Right ventricle myocardium inferior (tissue), 1 donor: ENCODE measurements at regions of chr9 and their contacts with region 1.

Region 1: DNA sequence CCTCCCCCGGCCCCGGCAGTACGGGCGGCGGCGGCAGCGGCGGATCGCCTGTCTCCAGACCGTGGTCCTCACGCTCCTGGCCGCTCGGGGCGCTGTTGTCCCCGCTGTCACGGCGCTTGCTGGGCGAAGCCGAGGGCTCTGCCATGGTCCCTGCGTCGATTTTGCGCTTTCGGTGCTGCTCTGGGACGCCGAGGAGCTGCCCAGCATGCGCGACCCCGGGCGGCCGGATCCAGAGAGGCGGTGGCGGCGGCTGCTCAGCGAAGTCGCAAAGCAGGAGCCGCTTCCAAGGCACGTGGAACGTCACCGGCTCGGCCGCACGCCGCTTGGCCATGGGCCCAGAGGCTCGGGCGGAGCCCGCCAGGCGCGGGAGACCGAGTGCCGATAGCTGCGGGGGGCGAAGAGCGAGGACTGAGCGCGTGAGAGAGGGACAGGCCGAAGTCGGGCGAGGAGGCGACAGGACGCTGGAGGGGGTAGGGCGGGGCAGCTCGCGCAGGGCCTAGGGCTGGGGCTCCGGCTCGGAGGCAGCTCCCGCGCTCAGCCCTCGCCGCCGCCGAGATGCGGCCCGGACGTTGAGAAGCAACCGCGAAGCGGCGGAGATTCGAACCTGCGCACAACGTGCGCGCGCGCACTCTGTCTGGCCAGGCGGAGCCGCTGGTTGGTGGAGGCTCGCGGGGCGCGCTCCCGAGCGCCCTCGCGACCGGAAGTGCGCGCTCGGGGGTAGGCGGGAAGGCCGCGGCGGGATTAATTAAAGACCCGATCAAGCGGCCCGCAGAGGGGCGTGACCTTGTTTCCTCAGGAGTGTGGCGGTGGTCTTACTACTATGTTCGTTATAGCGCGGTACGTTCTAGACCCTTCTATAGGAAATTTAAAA is at the start of gene C9orf40:
- DNase-seq: peak; percentile 96
- ATAC-seq: peak; percentile 99
- total RNA-seq, gene C9orf40: 2.8 TPM

Region 2: DNA sequence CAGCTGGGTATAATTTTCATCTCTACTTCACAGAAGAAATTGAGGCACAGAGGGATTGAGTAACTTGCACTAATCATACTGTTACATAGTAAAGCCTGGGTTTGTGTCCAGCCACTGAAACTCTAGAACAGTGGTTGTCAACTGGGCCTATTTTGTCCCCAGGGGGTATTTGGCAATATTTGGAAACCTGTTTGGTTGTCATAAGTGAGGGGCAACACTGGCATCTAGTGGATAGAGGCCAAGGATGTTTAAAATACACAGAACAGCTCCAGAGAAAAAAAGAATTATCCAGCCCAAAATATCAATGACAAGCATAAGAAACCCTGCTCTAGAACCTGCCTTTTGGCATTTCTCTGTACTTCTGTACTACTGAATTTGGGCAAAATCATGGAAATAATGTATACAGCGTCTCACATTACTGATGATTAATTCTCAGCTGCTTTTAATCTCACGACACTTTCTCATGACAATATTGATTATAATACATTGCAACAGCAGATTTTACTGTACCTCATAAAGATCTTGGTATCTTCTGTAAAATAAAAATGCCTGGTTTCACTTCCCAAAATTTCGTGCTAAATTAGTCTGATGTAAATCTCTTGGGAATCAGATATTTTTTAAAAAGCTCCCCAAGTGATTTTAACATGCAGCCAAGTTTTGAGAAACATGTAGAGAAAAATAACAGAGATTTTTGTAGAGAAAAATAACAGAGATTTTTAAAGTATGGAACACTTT is 342.7 kb before region 1 on chr9:
- intact Hi-C with region 1: no loop called
- DNase-seq: no peak
- ATAC-seq: no peak

Region 3: GRCh38 chr9:74773886-74774479 is 178.5 kb before region 1 on chr9:
- intact Hi-C with region 1: loop called (anchors 5 kb)
- DNase-seq: peak; percentile 80
- ATAC-seq: no peak

Region 4: GRCh38 chr9:74887041-74887980 is 65.2 kb before region 1 on chr9 and contains the start of gene TRPM6:
- intact Hi-C with region 1: loop called (anchors 1 kb)
- DNase-seq: peak; percentile 93
- ATAC-seq: peak; percentile 89
- total RNA-seq, gene TRPM6: 0.27 TPM

Region 5: DNA sequence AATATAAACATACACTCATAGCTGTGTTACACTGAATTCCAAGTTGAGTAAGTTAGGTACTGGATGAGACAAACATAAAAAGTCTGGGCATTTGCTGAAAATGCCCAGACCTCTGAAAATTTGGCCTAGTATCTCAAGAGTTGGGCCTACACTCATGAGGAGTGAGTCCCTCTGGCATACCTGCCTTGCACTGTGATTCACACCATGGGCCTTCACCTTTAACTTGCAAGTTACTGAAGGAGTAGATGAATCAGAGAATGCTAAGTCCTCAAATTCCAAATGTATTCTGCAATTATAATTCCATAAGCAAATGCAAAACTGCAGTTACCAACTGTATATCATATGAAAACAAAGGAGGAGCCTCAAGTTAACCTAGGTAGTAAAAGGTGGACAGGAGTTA is 32.5 kb after region 1 on chr9:
- intact Hi-C with region 1: no loop called
- DNase-seq: no peak
- ATAC-seq: no peak

Region 6: DNA sequence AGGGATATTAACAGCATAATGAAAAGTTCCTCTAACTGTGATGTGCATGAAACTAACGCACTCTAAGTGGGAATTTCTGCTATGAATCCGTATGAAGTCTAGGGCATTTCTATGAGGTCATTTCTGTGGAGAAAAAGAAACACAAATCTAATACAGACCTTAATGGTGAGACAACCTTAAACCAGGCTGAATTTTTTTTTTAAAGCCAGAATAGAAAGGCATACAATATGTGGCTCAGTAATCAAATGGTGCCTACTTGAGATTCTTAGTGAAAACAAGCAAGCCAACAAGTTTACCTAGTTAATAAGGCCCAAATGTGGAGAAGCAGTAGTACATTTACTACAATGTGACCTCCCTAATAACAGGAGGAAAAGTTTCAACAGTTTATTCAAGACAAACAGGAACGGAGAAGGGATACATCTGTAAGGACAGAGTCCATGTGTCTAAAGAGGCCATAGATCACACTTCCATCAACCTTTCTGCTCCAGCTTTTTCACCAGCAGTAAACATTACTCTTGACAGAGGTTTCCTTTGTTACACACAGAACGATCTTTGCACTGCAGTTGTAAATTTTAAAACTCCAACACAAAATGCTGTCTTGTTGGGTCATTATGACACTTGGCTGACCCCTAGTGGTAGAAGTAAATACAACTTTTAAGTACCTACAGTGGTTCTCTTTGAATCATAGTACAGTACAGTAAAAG is 49.4 kb after region 1 on chr9:
- intact Hi-C with region 1: loop called (anchors 5 kb)
- DNase-seq: no peak
- ATAC-seq: peak; percentile 74

Region 7: DNA sequence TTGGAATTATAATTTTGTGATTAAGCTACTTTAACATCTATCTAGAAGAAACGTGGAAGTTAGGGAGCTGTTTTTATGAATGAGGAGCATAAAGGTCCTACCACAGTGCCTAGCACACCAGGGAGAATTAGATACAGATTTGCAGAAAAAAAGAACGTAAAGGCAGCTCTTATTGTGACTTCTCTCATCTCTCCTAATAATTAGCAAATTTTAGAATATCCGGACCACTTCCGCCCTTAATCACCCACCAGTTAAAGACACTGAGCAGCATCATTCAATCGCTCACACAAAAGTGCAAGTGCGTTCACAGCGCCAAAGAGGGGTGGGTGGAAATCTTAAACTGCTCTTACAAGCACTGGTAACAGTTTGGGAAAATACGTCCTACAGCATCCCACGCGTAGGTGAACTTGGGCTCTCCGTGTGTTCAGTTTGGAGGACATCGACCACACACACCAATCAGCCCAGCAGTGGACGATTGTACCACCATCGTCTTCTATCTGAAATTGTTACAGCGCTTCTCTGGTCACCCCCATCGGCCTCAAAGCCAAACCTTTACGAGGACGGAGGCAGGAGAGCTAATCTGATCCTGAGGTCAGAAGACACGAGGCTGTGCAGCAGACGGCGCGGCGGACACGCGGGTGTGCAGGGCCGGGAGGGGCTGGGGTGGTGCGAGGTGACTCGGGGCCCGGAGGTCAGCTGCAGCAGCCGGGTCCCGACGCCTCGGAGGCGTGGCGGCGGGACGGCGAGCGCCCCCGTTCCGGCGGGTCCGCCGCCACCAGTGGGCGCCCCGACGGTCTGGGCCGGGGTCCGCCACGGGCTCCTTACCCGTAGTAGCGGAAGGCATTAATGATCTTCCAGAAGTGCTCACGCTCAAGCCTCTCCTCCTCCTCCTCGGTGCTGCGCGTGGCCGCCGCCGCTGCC is 74.9 kb after region 1 on chr9:
- intact Hi-C with region 1: loop called (anchors 5 kb)
- DNase-seq: peak; percentile 85
- ATAC-seq: peak; percentile 66

Region 8: DNA sequence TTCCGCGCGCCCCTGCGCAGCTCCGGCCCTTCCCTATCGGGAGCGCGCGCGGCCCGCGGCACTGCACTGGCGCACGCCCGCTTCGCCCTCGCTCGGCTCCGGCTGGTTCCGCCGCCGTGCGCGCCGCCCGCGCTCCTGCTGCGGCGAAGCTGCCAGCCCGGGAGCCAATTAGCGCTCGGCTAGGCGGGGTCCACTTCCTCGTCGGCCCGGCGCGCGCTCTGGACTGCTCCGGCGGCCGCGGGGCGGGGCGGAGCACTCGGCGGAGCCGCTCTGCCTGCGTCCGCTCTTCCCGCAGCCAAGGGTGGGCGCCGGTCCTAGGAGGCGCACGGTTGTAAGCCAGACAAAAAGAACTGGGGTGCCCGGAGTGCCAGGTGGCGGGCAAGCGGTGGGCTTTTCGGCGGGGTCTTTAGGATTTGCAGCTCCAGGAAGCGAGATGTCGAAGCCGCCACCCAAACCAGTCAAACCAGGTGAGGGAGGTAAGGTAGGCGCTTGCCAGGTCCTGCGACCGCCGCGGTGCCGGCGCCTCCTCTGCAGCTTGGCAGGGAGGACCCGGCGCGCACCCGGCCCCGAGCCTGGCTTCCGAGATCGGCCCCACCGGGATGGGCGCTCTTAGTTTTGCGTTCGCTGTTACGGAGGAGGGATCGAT is 135.9 kb after region 1 on chr9 and contains the start of gene OSTF1:
- intact Hi-C with region 1: loop called (anchors 5 kb)
- DNase-seq: peak; percentile 99
- ATAC-seq: peak; percentile 98
- total RNA-seq, gene OSTF1: 25.0 TPM